ENCODE measurements at regions of chr12 and their contacts with region 1.

Region 1: GRCh38 chr12:3299929-3300832 is 190.8 kb upstream of the PRMT8 start:
- DNase-seq: peak; percentile 68 to 84 (median 71)
- H3K4me3 ChIP-seq: peak overlapping the region in 1 of 2 donors; percentile 9
- H3K4me3 Mint-ChIP-seq: peak overlapping the region; percentile 75 to 90 (median 82)
- H3K27ac ChIP-seq: no peak overlapping the region
- H3K27ac Mint-ChIP-seq: peak overlapping the region in 6 of 7 donors; percentile 54 to 85 (median 73)
- H3K4me1 ChIP-seq: peaks cover 11% of the 10 kb centered on the region
- H3K4me1 Mint-ChIP-seq: peaks cover 10 to 14% (median 12%) of the 10 kb centered on the region in 4 donors
- H3K27me3 ChIP-seq: no peaks in the 10 kb centered on the region
- H3K27me3 Mint-ChIP-seq: peaks cover 0 to 24% of the 10 kb centered on the region in 2 donors

Region 2: GRCh38 chr12:3288690-3289089 is 11.5 kb before region 1 on chr12:
- CTCF ChIA-PET with region 1: interaction called, 64 read pairs
- POLR2A ChIA-PET with region 1: no interaction called
- intact Hi-C with region 1: no loop called
- DNase-seq: no peak
- H3K4me3 ChIP-seq: no peak overlapping the region
- H3K4me3 Mint-ChIP-seq: no peak overlapping the region
- H3K27ac ChIP-seq: no peak overlapping the region
- H3K27ac Mint-ChIP-seq: no peak overlapping the region
- H3K4me1 ChIP-seq: no peaks in the 10 kb centered on the region
- H3K4me1 Mint-ChIP-seq: no peaks in the 10 kb centered on the region
- H3K27me3 ChIP-seq: no peaks in the 10 kb centered on the region
- H3K27me3 Mint-ChIP-seq: peaks cover 2 to 8% of the 10 kb centered on the region in 2 donors

Region 3: GRCh38 chr12:3342056-3342455 is 41.9 kb after region 1 on chr12:
- CTCF ChIA-PET with region 1: interaction called, 13 read pairs
- POLR2A ChIA-PET with region 1: no interaction called
- intact Hi-C with region 1: no loop called
- DNase-seq: no peak
- H3K4me3 ChIP-seq: no peak overlapping the region
- H3K4me3 Mint-ChIP-seq: no peak overlapping the region
- H3K27ac ChIP-seq: no peak overlapping the region
- H3K27ac Mint-ChIP-seq: no peak overlapping the region
- H3K4me1 ChIP-seq: no peaks in the 10 kb centered on the region
- H3K4me1 Mint-ChIP-seq: no peaks in the 10 kb centered on the region
- H3K27me3 ChIP-seq: no peaks in the 10 kb centered on the region
- H3K27me3 Mint-ChIP-seq: peaks cover 14 to 39% of the 10 kb centered on the region in 2 donors

Region 4: GRCh38 chr12:3752741-3753486 is 452.7 kb after region 1 on chr12 and contains the start of gene CRACR2A:
- CTCF ChIA-PET with region 1: interaction called, 10 read pairs
- POLR2A ChIA-PET with region 1: interaction called, 5 read pairs
- intact Hi-C with region 1: no loop called
- DNase-seq: peak; percentile 79 to 85 (median 83)
- H3K4me3 ChIP-seq: peak within 1 kb of the TSS; percentile 82 to 89
- H3K4me3 Mint-ChIP-seq: peak within 1 kb of the TSS; percentile 87 to 95 (median 92)
- H3K27ac ChIP-seq: peak within 1 kb of the TSS; percentile 89
- H3K27ac Mint-ChIP-seq: peak within 1 kb of the TSS; percentile 94 to 99 (median 98)
- H3K4me1 ChIP-seq: peaks cover 61% of the 10 kb centered on the region
- H3K4me1 Mint-ChIP-seq: peaks cover 56 to 66% (median 60%) of the 10 kb centered on the region in 4 donors
- H3K27me3 ChIP-seq: no peaks in the 10 kb centered on the region
- H3K27me3 Mint-ChIP-seq: no peaks in the 10 kb centered on the region
- total RNA-seq, gene CRACR2A: 34.4 to 37.6 TPM

Region 5: DNA sequence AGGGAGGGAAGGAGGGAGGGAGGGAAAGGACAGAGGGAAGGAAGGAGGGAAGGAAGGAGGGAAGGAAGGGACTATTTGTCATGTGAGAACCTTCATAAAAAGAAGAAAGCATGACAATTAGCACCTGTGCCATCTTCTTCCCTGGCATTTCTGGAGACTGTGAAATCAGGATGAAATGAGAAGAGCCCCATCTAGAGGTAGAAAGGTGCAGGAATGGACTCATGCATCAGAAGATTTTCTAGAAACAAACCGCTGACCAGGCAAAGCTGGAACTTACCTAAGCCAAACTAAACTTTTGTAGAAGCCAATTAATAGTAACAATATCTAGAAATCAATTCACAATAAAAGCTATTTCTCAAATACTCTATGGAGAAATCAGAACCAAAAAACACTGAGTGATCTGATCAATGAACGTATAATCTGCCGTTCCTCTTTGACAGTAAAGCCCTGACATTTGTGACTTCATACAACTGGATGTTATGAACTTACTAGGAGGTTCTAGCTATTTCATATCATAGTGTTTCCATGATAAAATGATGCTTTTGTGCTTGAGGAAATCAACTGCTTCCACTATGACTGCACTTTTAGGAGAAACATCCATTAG is 477.1 kb after region 1 on chr12:
- CTCF ChIA-PET with region 1: interaction called, 47 read pairs
- POLR2A ChIA-PET with region 1: no interaction called
- intact Hi-C with region 1: loop called (anchors 1 kb)
- DNase-seq: peak in 4 of 5 donors; percentile 37 to 45 (median 42)
- H3K4me3 ChIP-seq: no peak overlapping the region
- H3K4me3 Mint-ChIP-seq: no peak overlapping the region
- H3K27ac ChIP-seq: no peak overlapping the region
- H3K27ac Mint-ChIP-seq: no peak overlapping the region
- H3K4me1 ChIP-seq: peaks cover 5% of the 10 kb centered on the region
- H3K4me1 Mint-ChIP-seq: peaks cover 4 to 6% (median 5%) of the 10 kb centered on the region in 4 donors
- H3K27me3 ChIP-seq: no peaks in the 10 kb centered on the region
- H3K27me3 Mint-ChIP-seq: no peaks in the 10 kb centered on the region

Region 6: DNA sequence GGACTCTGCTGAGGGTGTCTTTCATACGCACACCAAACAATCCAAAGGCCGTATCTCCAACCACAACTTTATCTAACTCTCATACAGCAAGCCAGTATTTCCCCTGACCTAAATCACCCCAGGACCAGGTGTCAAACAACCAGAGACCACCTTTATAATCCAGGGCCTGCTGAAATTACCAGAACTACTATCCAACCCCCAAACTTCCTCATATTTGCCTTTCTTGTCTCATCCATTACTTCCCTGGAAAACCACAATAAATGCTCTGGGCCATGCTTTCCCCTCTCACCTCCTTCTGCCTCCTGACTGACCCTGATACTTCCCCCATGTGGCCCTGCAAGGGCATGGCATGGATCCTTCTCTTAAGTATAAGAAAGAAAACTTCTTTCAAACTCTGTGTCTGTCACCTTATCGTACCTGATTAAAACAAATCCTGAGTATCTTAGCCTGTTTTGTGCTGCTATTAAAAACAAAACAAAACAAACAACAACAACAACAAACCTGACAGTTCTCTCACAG is 497.4 kb after region 1 on chr12:
- CTCF ChIA-PET with region 1: interaction called, 57 read pairs
- POLR2A ChIA-PET with region 1: no interaction called
- intact Hi-C with region 1: no loop called
- DNase-seq: no peak
- H3K4me3 ChIP-seq: no peak overlapping the region
- H3K4me3 Mint-ChIP-seq: no peak overlapping the region
- H3K27ac ChIP-seq: no peak overlapping the region
- H3K27ac Mint-ChIP-seq: no peak overlapping the region
- H3K4me1 ChIP-seq: no peaks in the 10 kb centered on the region
- H3K4me1 Mint-ChIP-seq: peaks cover 0 to 3% (median 2%) of the 10 kb centered on the region in 4 donors
- H3K27me3 ChIP-seq: no peaks in the 10 kb centered on the region
- H3K27me3 Mint-ChIP-seq: no peaks in the 10 kb centered on the region

Measured in CD4-positive, alpha-beta memory T cell (primary cell).